Activated B cell treated with CpG ODN at 0.5 μM for 24 hours (primary cell): ENCODE measurements at regions of chr22 and their contacts with region 1.

Region 1: DNA sequence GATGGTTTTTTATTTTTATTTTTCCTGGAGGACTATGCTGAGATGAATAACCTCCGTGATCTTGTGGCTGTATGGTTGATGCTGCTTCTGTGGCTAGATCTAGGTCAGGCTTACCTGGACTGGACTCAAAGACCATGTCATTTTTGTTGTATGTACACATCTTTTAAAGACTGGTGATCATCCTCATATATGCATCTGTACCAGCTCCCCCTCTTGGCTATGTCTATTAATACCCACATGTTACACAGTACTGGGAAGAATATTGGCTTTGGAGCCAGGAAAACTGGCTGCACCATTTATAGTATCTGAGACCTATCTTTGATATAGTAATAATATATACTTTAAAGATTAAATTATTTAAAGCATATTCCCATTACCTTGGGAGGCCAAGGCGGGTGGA is 18.4 kb upstream of the PITPNB start:
- DNase-seq: no peak
- ATAC-seq: no peak
- H3K4me3 Mint-ChIP-seq: no peak overlapping the region
- H3K27ac Mint-ChIP-seq: no peak overlapping the region
- H3K4me1 Mint-ChIP-seq: no peaks in the 10 kb centered on the region
- H3K27me3 Mint-ChIP-seq: no peaks in the 10 kb centered on the region
- CTCF ChIP-seq: no peak

Region 2: DNA sequence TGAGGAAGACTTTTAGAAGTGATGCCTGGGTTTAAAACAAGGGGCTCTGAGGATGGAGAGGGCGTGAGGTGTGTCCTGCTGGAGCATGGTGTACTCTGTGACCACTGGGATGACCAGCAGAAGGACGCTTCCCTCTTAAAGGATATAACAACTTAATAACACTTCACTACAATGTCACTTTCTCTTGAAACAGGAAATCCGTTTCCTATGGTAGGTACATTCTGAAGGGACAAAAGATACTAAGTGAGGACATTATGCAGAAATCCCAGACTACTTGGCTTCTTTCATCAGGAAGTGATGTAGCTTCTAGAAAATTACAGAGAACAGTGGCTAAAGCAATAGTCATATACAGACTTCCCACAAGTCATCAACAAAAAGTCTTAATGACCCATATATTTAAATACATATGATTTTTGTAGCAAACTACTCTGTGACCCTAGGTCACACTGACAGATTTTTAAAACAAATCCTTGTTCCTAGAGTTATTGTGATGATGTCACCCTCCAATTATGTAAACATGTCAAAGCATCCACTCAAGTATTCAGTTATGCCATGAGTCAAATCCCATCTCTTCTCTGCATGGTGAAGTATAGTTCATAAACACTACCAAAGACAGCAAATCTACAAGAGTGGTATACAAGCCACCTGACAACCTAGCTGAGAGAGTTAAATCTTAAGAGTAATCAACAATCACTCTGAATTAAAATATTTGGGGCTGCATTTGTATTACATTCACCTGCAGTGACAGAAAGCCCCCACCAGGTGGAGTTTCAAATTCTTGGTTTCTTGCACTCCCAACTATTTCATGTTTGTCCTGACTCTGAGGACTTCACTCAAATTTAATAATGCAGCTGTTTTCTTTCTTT is 51.2 kb before region 1 on chr22:
- CTCF ChIA-PET with region 1: interaction called, 6 read pairs
- POLR2A ChIA-PET with region 1: no interaction called
- intact Hi-C with region 1: loop called (anchors 1 kb)
- DNase-seq: no peak
- ATAC-seq: no peak
- H3K4me3 Mint-ChIP-seq: no peak overlapping the region
- H3K27ac Mint-ChIP-seq: no peak overlapping the region
- H3K4me1 Mint-ChIP-seq: no peaks in the 10 kb centered on the region
- H3K27me3 Mint-ChIP-seq: no peaks in the 10 kb centered on the region
- CTCF ChIP-seq: no peak

Region 3: DNA sequence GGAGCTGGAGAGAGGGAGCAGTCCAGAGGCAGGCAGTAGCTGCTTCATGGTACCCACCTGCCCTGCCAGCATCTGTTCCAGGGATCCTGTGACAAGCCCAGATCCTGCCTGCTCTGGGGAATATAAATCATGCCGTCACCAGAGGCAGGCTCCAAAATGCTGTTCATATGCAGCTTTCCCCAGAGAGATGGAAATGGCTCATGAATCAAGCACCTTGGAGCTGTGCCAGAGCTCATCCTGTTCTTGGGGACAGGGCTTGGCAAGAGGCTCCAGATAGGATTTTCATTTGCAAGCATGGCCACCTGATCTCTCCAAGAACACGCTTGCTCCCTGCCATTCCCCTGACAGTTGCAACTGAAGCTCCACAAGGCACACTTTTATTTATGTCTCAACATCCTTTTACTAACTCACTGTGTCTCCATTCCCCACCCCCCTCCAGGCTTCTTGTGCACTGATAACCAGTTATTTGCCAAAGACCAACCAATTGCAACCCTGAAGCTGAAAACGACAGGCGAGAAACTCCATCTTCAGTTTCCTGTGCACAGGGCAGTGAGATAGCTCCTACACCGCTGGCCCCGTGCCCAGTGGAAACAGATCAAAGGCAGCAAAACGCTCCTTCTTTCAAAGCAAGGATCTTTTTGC is 97.4 kb after region 1 on chr22:
- CTCF ChIA-PET with region 1: no interaction called
- POLR2A ChIA-PET with region 1: no interaction called
- intact Hi-C with region 1: no loop called
- DNase-seq: no peak
- ATAC-seq: no peak
- H3K4me3 Mint-ChIP-seq: no peak overlapping the region
- H3K27ac Mint-ChIP-seq: no peak overlapping the region
- H3K4me1 Mint-ChIP-seq: no peaks in the 10 kb centered on the region
- H3K27me3 Mint-ChIP-seq: peaks cover 20% of the 10 kb centered on the region
- CTCF ChIP-seq: no peak

Region 4: GRCh38 chr22:28310299-28310698 is 372.8 kb after region 1 on chr22:
- CTCF ChIA-PET with region 1: no interaction called
- POLR2A ChIA-PET with region 1: no interaction called
- intact Hi-C with region 1: no loop called
- DNase-seq: no peak
- ATAC-seq: no peak
- H3K4me3 Mint-ChIP-seq: no peak overlapping the region
- H3K27ac Mint-ChIP-seq: no peak overlapping the region
- H3K4me1 Mint-ChIP-seq: no peaks in the 10 kb centered on the region
- H3K27me3 Mint-ChIP-seq: peaks cover 6% of the 10 kb centered on the region
- CTCF ChIP-seq: no peak